ENCODE measurements at regions of chr14 and their contacts with region 1.

Region 1: GRCh38 chr14:54175298-54175942 is 218.8 kb upstream of the BMP4 start:
- DNase-seq: peak; percentile 78
- ATAC-seq: peak; percentile 70
- H3K4me3 ChIP-seq: no peak overlapping the region
- H3K27ac ChIP-seq: peak overlapping the region; percentile 52
- H3K4me1 ChIP-seq: peaks cover 40 to 45% of the 10 kb centered on the region in 2 experiments
- H3K27me3 ChIP-seq: no peaks in the 10 kb centered on the region
- CTCF ChIP-seq: peak; percentile 66 to 84 (median 75); a peak in 5 of 6 replicates
- POLR2A ChIP-seq: no peak
- RAD21 ChIP-seq: peak; percentile 82

Region 2: DNA sequence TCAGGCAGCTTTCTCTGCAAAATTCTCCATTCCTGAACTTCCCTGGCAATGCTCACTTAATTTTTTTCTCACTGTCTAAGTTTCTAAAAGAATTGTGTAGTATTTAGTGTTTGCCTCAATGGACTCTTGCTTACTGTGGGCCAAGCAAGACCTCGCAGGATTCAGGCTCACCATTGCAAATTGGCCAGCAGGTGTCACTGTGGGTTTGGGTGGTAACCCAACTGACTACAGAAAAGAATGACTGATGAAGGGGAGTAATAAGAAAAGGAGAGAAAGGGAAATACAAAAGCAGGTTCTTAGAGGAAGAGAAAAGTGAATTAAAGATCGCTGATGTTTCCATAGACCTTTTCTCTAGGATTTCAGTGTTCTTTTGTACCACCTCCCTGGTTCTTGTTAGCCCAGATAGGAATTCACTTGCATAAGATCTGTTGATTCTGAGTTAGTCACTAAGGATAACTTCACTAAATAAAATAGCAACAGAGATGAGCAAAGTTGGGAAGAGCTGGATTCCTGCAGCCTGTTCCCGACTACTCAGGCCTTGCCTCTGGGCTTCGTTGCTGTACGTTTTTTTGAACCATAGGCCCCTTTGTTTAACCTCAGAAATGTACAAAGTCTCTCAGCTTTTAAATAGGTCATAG is 635.8 kb before region 1 on chr14:
- CTCF ChIA-PET with region 1: interaction called, 9 read pairs
- POLR2A ChIA-PET with region 1: no interaction called
- RAD21 ChIA-PET with region 1: no interaction called
- intact Hi-C with region 1: loop called (anchors 1 kb)
- DNase-seq: peak; percentile 71
- ATAC-seq: peak; percentile 95
- H3K4me3 ChIP-seq: no peak overlapping the region
- H3K27ac ChIP-seq: peak overlapping the region; percentile 34; the same call in 1 of the 2 replicates
- H3K4me1 ChIP-seq: peaks cover 14 to 23% of the 10 kb centered on the region in 2 experiments; a peak in 3 of 4 replicates
- H3K27me3 ChIP-seq: no peaks in the 10 kb centered on the region
- CTCF ChIP-seq: peak; percentile 73 to 96 (median 85)
- POLR2A ChIP-seq: no peak
- RAD21 ChIP-seq: peak; percentile 93

Region 3: GRCh38 chr14:54025661-54026060 is 149.8 kb before region 1 on chr14:
- CTCF ChIA-PET with region 1: no interaction called
- POLR2A ChIA-PET with region 1: no interaction called
- RAD21 ChIA-PET with region 1: no interaction called
- intact Hi-C with region 1: loop called (anchors 1 kb)
- DNase-seq: peak; percentile 43
- ATAC-seq: peak; percentile 93
- H3K4me3 ChIP-seq: no peak overlapping the region
- H3K27ac ChIP-seq: no peak overlapping the region
- H3K4me1 ChIP-seq: no peaks in the 10 kb centered on the region; a peak in 1 of 4 replicates
- H3K27me3 ChIP-seq: no peaks in the 10 kb centered on the region
- CTCF ChIP-seq: peak; percentile 55 to 68 (median 59); a peak in 5 of 6 replicates
- POLR2A ChIP-seq: no peak
- RAD21 ChIP-seq: peak; percentile 79

Region 4: GRCh38 chr14:54253195-54253947 is 78.0 kb after region 1 on chr14:
- CTCF ChIA-PET with region 1: no interaction called
- POLR2A ChIA-PET with region 1: no interaction called
- RAD21 ChIA-PET with region 1: interaction called in 1 of 2 experiments, 3 read pairs
- intact Hi-C with region 1: loop called (anchors 5 kb)
- DNase-seq: peak; percentile 91
- ATAC-seq: peak; percentile 67
- H3K4me3 ChIP-seq: peak overlapping the region in 1 of 2 experiments; percentile 43; a peak in 2 of 4 replicates
- H3K27ac ChIP-seq: peak overlapping the region; percentile 86
- H3K4me1 ChIP-seq: peaks cover 37 to 54% of the 10 kb centered on the region in 2 experiments
- H3K27me3 ChIP-seq: no peaks in the 10 kb centered on the region; the same call in 1 of the 2 replicates
- CTCF ChIP-seq: no peak
- POLR2A ChIP-seq: no peak
- RAD21 ChIP-seq: peak; percentile 36; the same call in 1 of the 2 replicates

Region 5: GRCh38 chr14:54338696-54339317 is 163.4 kb after region 1 on chr14:
- CTCF ChIA-PET with region 1: interaction called, 10 read pairs
- POLR2A ChIA-PET with region 1: no interaction called
- RAD21 ChIA-PET with region 1: no interaction called
- intact Hi-C with region 1: loop called (anchors 5 kb)
- DNase-seq: peak; percentile 55
- ATAC-seq: peak; percentile 86
- H3K4me3 ChIP-seq: no peak overlapping the region
- H3K27ac ChIP-seq: no peak overlapping the region; the same call in 1 of the 2 replicates
- H3K4me1 ChIP-seq: peaks cover 18 to 32% of the 10 kb centered on the region in 2 experiments
- H3K27me3 ChIP-seq: no peaks in the 10 kb centered on the region
- CTCF ChIP-seq: peak; percentile 62 to 75 (median 71); a peak in 5 of 6 replicates
- POLR2A ChIP-seq: no peak
- RAD21 ChIP-seq: peak; percentile 95

Measured in HCT116 (cell line).